ENCODE measurements at regions of chr10 and their contacts with region 1.

Region 1: GRCh38 chr10:73495884-73496674 is at the start of gene PPP3CB:
- DNase-seq: peak; percentile 84 to 97 (median 90)
- ATAC-seq: peak; percentile 82
- H3K4me3 ChIP-seq: peak within 1 kb of the TSS; percentile 95
- H3K4me3 Mint-ChIP-seq: peak within 1 kb of the TSS; percentile 91
- H3K27ac ChIP-seq: peak within 1 kb of the TSS; percentile 90 to 95
- H3K27ac Mint-ChIP-seq: peak within 1 kb of the TSS; percentile 78
- H3K4me1 ChIP-seq: peaks cover 31% of the 10 kb centered on the region
- H3K4me1 Mint-ChIP-seq: peaks cover 58% of the 10 kb centered on the region
- H3K27me3 ChIP-seq: no peaks in the 10 kb centered on the region
- H3K27me3 Mint-ChIP-seq: no peaks in the 10 kb centered on the region
- CTCF ChIP-seq: no peak
- total RNA-seq, gene PPP3CB: 20.2 to 20.3 TPM

Region 2: DNA sequence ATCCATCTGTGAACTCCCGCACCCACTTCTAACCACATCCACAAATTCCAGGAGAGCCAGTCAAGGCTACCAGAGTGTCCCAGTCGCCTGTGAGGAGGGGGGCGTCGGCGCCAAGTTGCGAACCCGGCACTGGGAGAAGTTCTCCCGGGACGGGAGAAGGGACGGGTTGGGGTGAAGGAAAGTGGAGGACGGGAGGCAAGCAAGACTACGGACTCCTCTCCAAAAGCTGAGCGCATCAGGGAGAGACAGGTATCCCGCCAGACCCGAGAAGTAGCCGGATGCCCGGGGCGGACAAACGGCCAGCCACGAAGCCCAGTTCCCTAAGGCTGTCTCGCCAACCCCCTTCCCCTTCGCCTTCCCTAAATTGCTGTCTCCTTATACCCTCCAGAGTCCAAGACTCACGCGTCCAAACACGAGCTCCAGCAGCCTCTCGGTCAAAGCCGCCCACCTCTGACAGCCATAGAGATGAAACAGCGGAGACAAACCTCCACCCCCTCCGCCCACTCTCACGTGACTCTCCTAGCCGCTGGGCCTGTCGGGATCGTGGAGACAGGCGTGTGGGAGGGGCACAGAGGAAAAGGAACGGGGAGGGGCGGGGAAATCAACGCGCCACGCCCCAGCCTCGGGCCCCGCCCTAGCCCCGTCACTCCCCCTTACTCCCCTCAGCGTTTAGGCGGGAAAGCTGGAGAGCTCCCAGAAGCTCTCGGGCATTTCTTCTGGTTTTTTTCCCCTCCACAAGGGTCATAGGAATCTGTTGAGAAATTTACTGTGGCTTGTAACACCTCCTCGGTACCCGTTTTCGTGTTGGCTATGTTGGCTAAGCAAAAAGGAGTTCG is 870.3 kb before region 1 on chr10 and contains the start of gene MICU1:
- CTCF ChIA-PET with region 1: no interaction called
- POLR2A ChIA-PET with region 1: interaction called, 3 read pairs
- intact Hi-C with region 1: loop called in 1 of 2 experiments (anchors 10 kb)
- DNase-seq: peak; percentile 85 to 97 (median 92)
- ATAC-seq: peak; percentile 99
- H3K4me3 ChIP-seq: peak within 1 kb of the TSS; percentile 92
- H3K4me3 Mint-ChIP-seq: peak within 1 kb of the TSS; percentile 99
- H3K27ac ChIP-seq: peak within 1 kb of the TSS; percentile 15 to 42
- H3K27ac Mint-ChIP-seq: peak within 1 kb of the TSS; percentile 83
- H3K4me1 ChIP-seq: peaks cover 16% of the 10 kb centered on the region
- H3K4me1 Mint-ChIP-seq: peaks cover 26% of the 10 kb centered on the region
- H3K27me3 ChIP-seq: no peaks in the 10 kb centered on the region
- H3K27me3 Mint-ChIP-seq: no peaks in the 10 kb centered on the region
- CTCF ChIP-seq: no peak
- total RNA-seq, gene MICU1: 9.4 to 12.1 TPM

Region 3: GRCh38 chr10:73246783-73247508 is 249.1 kb before region 1 on chr10 and contains the start of gene DNAJC9:
- CTCF ChIA-PET with region 1: no interaction called
- POLR2A ChIA-PET with region 1: interaction called, 20 read pairs
- intact Hi-C with region 1: loop called (anchors 2 kb)
- DNase-seq: peak; percentile 94 to 99 (median 97)
- ATAC-seq: peak; percentile 85
- H3K4me3 ChIP-seq: peak within 1 kb of the TSS; percentile 81
- H3K4me3 Mint-ChIP-seq: peak within 1 kb of the TSS; percentile 96
- H3K27ac ChIP-seq: peak within 1 kb of the TSS; percentile 81 to 94
- H3K27ac Mint-ChIP-seq: peak within 1 kb of the TSS; percentile 86
- H3K4me1 ChIP-seq: peaks cover 26% of the 10 kb centered on the region
- H3K4me1 Mint-ChIP-seq: peaks cover 68% of the 10 kb centered on the region
- H3K27me3 ChIP-seq: no peaks in the 10 kb centered on the region
- H3K27me3 Mint-ChIP-seq: no peaks in the 10 kb centered on the region
- CTCF ChIP-seq: no peak
- total RNA-seq, gene DNAJC9: 15.4 to 15.8 TPM

Region 4: GRCh38 chr10:73366381-73367298 is 129.4 kb before region 1 on chr10:
- CTCF ChIA-PET with region 1: no interaction called
- POLR2A ChIA-PET with region 1: no interaction called
- intact Hi-C with region 1: no loop called
- DNase-seq: no peak
- ATAC-seq: no peak
- H3K4me3 ChIP-seq: no peak overlapping the region
- H3K4me3 Mint-ChIP-seq: no peak overlapping the region
- H3K27ac ChIP-seq: no peak overlapping the region
- H3K27ac Mint-ChIP-seq: peak overlapping the region; percentile 62
- H3K4me1 ChIP-seq: no peaks in the 10 kb centered on the region
- H3K4me1 Mint-ChIP-seq: no peaks in the 10 kb centered on the region
- H3K27me3 ChIP-seq: no peaks in the 10 kb centered on the region
- H3K27me3 Mint-ChIP-seq: no peaks in the 10 kb centered on the region
- CTCF ChIP-seq: no peak

Region 5: GRCh38 chr10:73413528-73414229 is 82.4 kb before region 1 on chr10 and contains the start of gene ANXA7:
- CTCF ChIA-PET with region 1: no interaction called
- POLR2A ChIA-PET with region 1: interaction called, 36 read pairs
- intact Hi-C with region 1: loop called in 1 of 2 experiments (anchors 2 kb)
- DNase-seq: peak; percentile 83 to 96 (median 92)
- ATAC-seq: peak; percentile 97
- H3K4me3 ChIP-seq: peak within 1 kb of the TSS; percentile 75
- H3K4me3 Mint-ChIP-seq: peak within 1 kb of the TSS; percentile 91
- H3K27ac ChIP-seq: peak within 1 kb of the TSS; percentile 86 to 98
- H3K27ac Mint-ChIP-seq: peak within 1 kb of the TSS; percentile 84
- H3K4me1 ChIP-seq: peaks cover 36% of the 10 kb centered on the region
- H3K4me1 Mint-ChIP-seq: peaks cover 57% of the 10 kb centered on the region
- H3K27me3 ChIP-seq: no peaks in the 10 kb centered on the region
- H3K27me3 Mint-ChIP-seq: no peaks in the 10 kb centered on the region
- CTCF ChIP-seq: peak; percentile 67
- total RNA-seq, gene ANXA7: 77.7 to 79.6 TPM

Region 6: DNA sequence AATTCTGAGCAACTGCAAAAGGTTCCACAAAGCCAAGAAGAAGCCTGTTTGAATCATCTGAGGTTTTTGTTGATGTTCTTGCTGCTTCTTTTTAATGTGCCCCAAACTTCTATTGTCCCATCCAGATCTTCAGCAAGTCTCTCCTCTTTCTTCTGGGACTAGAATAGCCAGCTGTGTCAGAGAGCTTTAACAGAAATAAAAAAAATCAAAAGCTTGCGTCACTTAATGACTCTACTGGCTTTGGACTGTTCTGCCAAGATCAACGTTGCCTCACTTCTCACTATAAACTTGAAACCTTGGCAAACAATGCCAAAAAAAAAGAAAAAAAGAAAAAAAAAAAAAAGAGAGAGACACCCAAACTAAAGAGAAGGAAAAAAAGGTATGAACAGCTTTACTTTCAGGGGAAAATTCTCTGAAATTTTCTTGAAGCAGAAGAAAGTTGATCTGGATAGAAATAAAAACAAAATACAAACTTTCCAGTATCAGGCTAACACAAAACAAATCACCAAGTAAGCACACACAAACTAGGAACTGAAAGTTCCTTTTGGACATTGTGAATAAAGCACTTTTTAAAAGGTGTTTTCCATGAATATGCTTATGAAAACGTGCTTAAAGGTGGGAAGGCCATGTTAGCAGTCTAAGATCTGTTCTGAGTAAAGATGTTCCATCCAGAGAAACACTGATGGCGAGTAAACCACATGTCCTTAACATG is 80.3 kb after region 1 on chr10:
- CTCF ChIA-PET with region 1: no interaction called
- POLR2A ChIA-PET with region 1: no interaction called
- intact Hi-C with region 1: no loop called
- DNase-seq: no peak
- ATAC-seq: no peak
- H3K4me3 ChIP-seq: no peak overlapping the region
- H3K4me3 Mint-ChIP-seq: no peak overlapping the region
- H3K27ac ChIP-seq: no peak overlapping the region
- H3K27ac Mint-ChIP-seq: no peak overlapping the region
- H3K4me1 ChIP-seq: no peaks in the 10 kb centered on the region
- H3K4me1 Mint-ChIP-seq: no peaks in the 10 kb centered on the region
- H3K27me3 ChIP-seq: no peaks in the 10 kb centered on the region
- H3K27me3 Mint-ChIP-seq: no peaks in the 10 kb centered on the region
- CTCF ChIP-seq: no peak

Region 7: DNA sequence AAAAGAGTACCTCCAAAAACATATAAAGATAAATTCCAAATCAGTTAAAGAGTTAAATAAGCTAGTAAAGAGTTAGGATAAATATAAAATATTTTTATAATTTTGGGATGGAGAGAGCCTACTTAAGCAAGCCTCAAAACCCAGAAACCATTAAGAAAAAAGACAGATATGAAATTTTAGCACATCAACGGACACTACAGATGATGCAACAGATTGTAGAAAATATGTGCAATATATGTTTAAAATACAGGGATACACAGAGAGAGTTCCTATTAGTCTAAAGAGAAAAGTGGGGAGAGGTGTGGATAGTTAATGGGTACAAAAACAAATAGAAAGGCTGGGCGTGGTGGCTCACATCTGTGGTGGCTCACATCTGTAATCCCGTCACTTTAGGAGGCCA is 118.6 kb after region 1 on chr10:
- CTCF ChIA-PET with region 1: no interaction called
- POLR2A ChIA-PET with region 1: no interaction called
- intact Hi-C with region 1: no loop called
- DNase-seq: no peak
- ATAC-seq: no peak
- H3K4me3 ChIP-seq: no peak overlapping the region
- H3K4me3 Mint-ChIP-seq: no peak overlapping the region
- H3K27ac ChIP-seq: no peak overlapping the region
- H3K27ac Mint-ChIP-seq: no peak overlapping the region
- H3K4me1 ChIP-seq: no peaks in the 10 kb centered on the region
- H3K4me1 Mint-ChIP-seq: no peaks in the 10 kb centered on the region
- H3K27me3 ChIP-seq: no peaks in the 10 kb centered on the region
- H3K27me3 Mint-ChIP-seq: no peaks in the 10 kb centered on the region
- CTCF ChIP-seq: no peak

Region 8: GRCh38 chr10:73730153-73730906 is 234.3 kb after region 1 on chr10:
- CTCF ChIA-PET with region 1: no interaction called
- POLR2A ChIA-PET with region 1: interaction called, 12 read pairs
- intact Hi-C with region 1: no loop called
- DNase-seq: peak; percentile 78 to 94 (median 90)
- ATAC-seq: peak; percentile 90
- H3K4me3 ChIP-seq: peak overlapping the region; percentile 87
- H3K4me3 Mint-ChIP-seq: peak overlapping the region; percentile 98
- H3K27ac ChIP-seq: peak overlapping the region; percentile 77 to 86
- H3K27ac Mint-ChIP-seq: peak overlapping the region; percentile 94
- H3K4me1 ChIP-seq: peaks cover 27% of the 10 kb centered on the region
- H3K4me1 Mint-ChIP-seq: peaks cover 31% of the 10 kb centered on the region
- H3K27me3 ChIP-seq: no peaks in the 10 kb centered on the region
- H3K27me3 Mint-ChIP-seq: no peaks in the 10 kb centered on the region
- CTCF ChIP-seq: no peak

Region 9: GRCh38 chr10:73785221-73785720 is 289.2 kb after region 1 on chr10 and contains the start of gene ZSWIM8:
- CTCF ChIA-PET with region 1: no interaction called
- POLR2A ChIA-PET with region 1: interaction called, 5 read pairs
- intact Hi-C with region 1: loop called in 1 of 2 experiments (anchors 10 kb)
- DNase-seq: peak; percentile 69 to 95 (median 82)
- ATAC-seq: peak; percentile 83
- H3K4me3 ChIP-seq: peak within 1 kb of the TSS; percentile 94
- H3K4me3 Mint-ChIP-seq: peak within 1 kb of the TSS; percentile 98
- H3K27ac ChIP-seq: peak within 1 kb of the TSS; percentile 80
- H3K27ac Mint-ChIP-seq: peak within 1 kb of the TSS; percentile 96
- H3K4me1 ChIP-seq: peaks cover 38% of the 10 kb centered on the region
- H3K4me1 Mint-ChIP-seq: peaks cover 61% of the 10 kb centered on the region
- H3K27me3 ChIP-seq: no peaks in the 10 kb centered on the region
- H3K27me3 Mint-ChIP-seq: no peaks in the 10 kb centered on the region
- CTCF ChIP-seq: no peak
- total RNA-seq, gene ZSWIM8: 66.4 to 70.7 TPM

Measured in CD4-positive, alpha-beta T cell (primary cell).